Prostate gland (tissue), 2 donors: ENCODE measurements at regions of chr1 and their contacts with region 1.

Region 1: GRCh38 chr1:114282751-114283403 is 129.2 kb upstream of the SYT6 start:
- DNase-seq: peak; percentile 78
- H3K4me3 ChIP-seq: no peak overlapping the region
- H3K27ac ChIP-seq: no peak overlapping the region
- H3K4me1 ChIP-seq: no peaks in the 10 kb centered on the region
- H3K27me3 ChIP-seq: no peaks in the 10 kb centered on the region
- CTCF ChIP-seq: peak; percentile 57 to 81 (median 75)
- POLR2A ChIP-seq: no peak

Region 2: DNA sequence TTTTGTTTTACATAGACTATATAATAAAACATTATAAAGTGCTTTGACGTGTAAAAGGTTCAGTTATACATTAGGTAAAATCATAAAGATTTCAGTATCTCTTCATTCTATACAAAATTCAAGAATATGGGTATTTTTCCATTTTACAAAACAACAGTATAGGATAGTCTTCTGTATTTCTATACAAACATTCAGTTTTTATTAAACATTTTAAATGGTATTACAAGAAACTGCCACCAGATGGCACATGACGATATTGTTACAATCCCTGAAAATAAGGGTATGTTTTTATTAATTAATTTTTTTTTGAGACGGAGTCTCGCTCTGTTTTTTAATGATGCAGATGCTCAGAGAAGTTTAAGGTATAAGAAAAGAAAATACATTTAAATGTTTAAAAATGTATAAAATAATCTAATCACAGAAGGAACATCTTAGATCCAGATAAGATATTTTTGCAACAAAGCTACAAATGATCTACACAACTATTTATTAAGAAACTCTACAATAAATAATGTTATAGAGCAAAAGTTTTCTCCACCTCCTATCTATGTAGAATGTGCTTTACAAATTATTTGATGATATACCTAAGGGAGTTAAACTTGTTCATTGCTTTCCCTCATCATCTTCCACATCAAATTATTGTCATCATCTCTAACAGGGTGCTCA is 447.1 kb before region 1 on chr1:
- intact Hi-C with region 1: loop called (anchors 5 kb)
- DNase-seq: no peak
- H3K4me3 ChIP-seq: no peak overlapping the region
- H3K27ac ChIP-seq: no peak overlapping the region
- H3K4me1 ChIP-seq: no peaks in the 10 kb centered on the region
- H3K27me3 ChIP-seq: no peaks in the 10 kb centered on the region
- CTCF ChIP-seq: peak; percentile 28 to 73 (median 68)
- POLR2A ChIP-seq: no peak

Region 3: GRCh38 chr1:114173680-114174281 is 109.1 kb before region 1 on chr1:
- intact Hi-C with region 1: no loop called
- DNase-seq: no peak
- H3K4me3 ChIP-seq: no peak overlapping the region
- H3K27ac ChIP-seq: no peak overlapping the region
- H3K4me1 ChIP-seq: no peaks in the 10 kb centered on the region
- H3K27me3 ChIP-seq: no peaks in the 10 kb centered on the region
- CTCF ChIP-seq: no peak
- POLR2A ChIP-seq: no peak

Region 4: GRCh38 chr1:114418247-114418646 is 135.4 kb after region 1 on chr1:
- intact Hi-C with region 1: no loop called
- DNase-seq: no peak
- H3K4me3 ChIP-seq: no peak overlapping the region
- H3K27ac ChIP-seq: no peak overlapping the region
- H3K4me1 ChIP-seq: no peaks in the 10 kb centered on the region
- H3K27me3 ChIP-seq: no peaks in the 10 kb centered on the region
- CTCF ChIP-seq: no peak
- POLR2A ChIP-seq: no peak